ENCODE measurements at regions of chr9 and their contacts with region 1.

Region 1: DNA sequence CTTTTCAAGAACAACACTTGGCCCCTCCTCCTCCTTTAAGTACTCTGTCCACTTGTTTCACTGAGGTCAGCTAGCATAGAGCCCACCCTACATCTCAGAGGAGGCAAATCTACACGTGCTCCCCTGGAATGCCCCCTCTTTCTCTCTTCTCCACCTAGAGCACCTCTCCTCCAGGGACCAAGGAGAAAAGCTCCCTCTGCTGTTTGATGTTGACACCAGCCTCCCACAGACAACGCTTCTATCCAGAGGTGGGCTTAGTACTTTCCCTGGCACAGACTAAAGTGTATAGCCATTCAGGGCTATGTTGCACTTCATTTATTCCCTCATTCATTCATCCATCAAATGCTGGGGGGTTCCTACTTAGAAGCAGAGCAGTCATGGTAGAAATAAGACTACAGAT is 68.2 kb upstream of the TAF1L start:
- DNase-seq: no peak
- ATAC-seq: no peak
- H3K4me3 ChIP-seq: no peak overlapping the region
- H3K27ac ChIP-seq: no peak overlapping the region
- H3K4me1 ChIP-seq: no peaks in the 10 kb centered on the region
- H3K27me3 ChIP-seq: peaks cover 0 to 4% (median 0%) of the 10 kb centered on the region in 9 donors
- CTCF ChIP-seq: no peak
- POLR2A ChIP-seq: no peak

Region 2: GRCh38 chr9:32631991-32632390 is 71.6 kb before region 1 on chr9:
- intact Hi-C with region 1: loop called in 1 of 10 experiments (anchors 10 kb)
- DNase-seq: no peak
- ATAC-seq: no peak
- H3K4me3 ChIP-seq: no peak overlapping the region
- H3K27ac ChIP-seq: no peak overlapping the region
- H3K4me1 ChIP-seq: no peaks in the 10 kb centered on the region
- H3K27me3 ChIP-seq: peaks cover 0 to 5% (median 0%) of the 10 kb centered on the region in 9 donors
- CTCF ChIP-seq: no peak
- POLR2A ChIP-seq: no peak

Region 3: DNA sequence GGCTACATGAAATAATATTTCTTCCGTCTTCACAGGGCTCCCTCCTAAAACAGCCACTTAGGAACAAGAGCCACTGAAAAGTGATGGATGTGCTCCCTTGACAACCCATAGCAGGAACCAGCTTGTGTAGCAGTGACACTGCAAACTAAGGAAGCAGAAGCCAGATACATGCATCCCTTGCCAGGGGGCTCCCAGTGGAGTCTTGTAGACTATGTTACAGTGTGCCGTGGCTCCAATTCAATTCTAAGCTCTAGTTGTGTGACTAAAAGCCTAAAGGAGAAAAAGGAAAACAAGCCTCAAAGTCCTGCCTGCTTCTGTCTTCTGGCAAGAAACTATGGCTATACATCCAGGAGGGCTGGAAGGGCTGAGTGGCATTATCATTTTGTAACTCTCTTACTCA is 56.0 kb before region 1 on chr9:
- intact Hi-C with region 1: loop called in 1 of 10 experiments (anchors 10 kb)
- DNase-seq: no peak
- ATAC-seq: no peak
- H3K4me3 ChIP-seq: no peak overlapping the region
- H3K27ac ChIP-seq: no peak overlapping the region
- H3K4me1 ChIP-seq: no peaks in the 10 kb centered on the region
- H3K27me3 ChIP-seq: no peaks in the 10 kb centered on the region
- CTCF ChIP-seq: no peak
- POLR2A ChIP-seq: no peak